Activated T-helper 1 cell treated with anti-CD3 and anti-CD28 coated beads, Interleukin-12 subunit alpha, Interleukin-12 subunit beta, Interleukin-2, Interleukin-4 antibody, amounts not matched to agents 30 ng/mL and 10 ng/mL and 1 ng/mL, durations not matched to agents 14 hours and 24 hours and 36 hours (primary cell): ENCODE measurements at regions of chr11 and their contacts with region 1.

Region 1: DNA sequence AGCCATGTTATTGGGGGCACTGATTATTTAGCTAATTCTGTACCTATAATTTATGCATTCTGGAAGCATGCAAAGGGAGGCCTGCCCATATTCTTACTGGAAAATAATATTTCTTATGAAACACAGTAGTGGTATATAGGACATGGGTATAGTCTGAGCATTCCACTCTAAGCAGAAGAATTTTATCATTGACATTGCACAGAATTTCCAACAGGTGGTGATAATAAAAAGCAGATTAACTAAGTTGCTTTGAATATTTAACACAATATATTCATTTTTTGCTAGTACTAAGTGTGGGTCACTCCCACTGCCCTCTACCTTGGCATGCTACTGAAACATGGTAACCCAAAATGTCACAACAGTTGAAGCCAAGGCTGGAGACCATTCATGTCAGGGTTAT is 728.8 kb upstream of the FAT3 start:
- DNase-seq: no peak
- H3K4me3 Mint-ChIP-seq: no peak overlapping the region
- H3K27ac Mint-ChIP-seq: no peak overlapping the region
- H3K4me1 Mint-ChIP-seq: no peaks in the 10 kb centered on the region
- H3K27me3 Mint-ChIP-seq: no peaks in the 10 kb centered on the region

Region 2: GRCh38 chr11:89660234-89660633 is 1835.6 kb before region 1 on chr11:
- intact Hi-C with region 1: no loop called
- DNase-seq: no peak
- H3K4me3 Mint-ChIP-seq: no peak overlapping the region
- H3K27ac Mint-ChIP-seq: no peak overlapping the region
- H3K4me1 Mint-ChIP-seq: no peaks in the 10 kb centered on the region
- H3K27me3 Mint-ChIP-seq: no peaks in the 10 kb centered on the region

Region 3: DNA sequence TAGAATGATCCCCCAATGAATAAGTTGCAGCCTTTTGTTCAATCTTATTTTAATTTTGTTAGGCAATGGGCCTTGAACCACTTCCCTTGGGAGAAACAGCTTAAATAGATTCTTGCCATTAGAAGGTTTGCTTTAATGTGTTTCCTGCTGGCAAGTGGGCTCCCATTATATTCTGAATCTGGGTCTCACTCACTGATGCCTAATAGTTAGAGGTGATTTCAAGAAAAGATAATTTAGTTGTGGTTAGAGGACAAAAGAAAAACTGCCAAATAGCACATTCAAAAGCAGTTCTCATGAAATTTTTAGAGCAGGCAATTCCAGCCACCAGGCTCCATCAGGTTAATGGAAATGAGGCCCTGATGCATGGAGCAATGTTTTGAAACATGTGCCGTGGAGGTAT is 910.3 kb before region 1 on chr11:
- intact Hi-C with region 1: loop called (anchors 5 kb)
- DNase-seq: no peak
- H3K4me3 Mint-ChIP-seq: no peak overlapping the region
- H3K27ac Mint-ChIP-seq: no peak overlapping the region
- H3K4me1 Mint-ChIP-seq: no peaks in the 10 kb centered on the region
- H3K27me3 Mint-ChIP-seq: no peaks in the 10 kb centered on the region

Region 4: GRCh38 chr11:91382946-91383345 is 112.9 kb before region 1 on chr11:
- intact Hi-C with region 1: no loop called
- DNase-seq: no peak
- H3K4me3 Mint-ChIP-seq: no peak overlapping the region
- H3K27ac Mint-ChIP-seq: no peak overlapping the region
- H3K4me1 Mint-ChIP-seq: no peaks in the 10 kb centered on the region
- H3K27me3 Mint-ChIP-seq: no peaks in the 10 kb centered on the region

Region 5: DNA sequence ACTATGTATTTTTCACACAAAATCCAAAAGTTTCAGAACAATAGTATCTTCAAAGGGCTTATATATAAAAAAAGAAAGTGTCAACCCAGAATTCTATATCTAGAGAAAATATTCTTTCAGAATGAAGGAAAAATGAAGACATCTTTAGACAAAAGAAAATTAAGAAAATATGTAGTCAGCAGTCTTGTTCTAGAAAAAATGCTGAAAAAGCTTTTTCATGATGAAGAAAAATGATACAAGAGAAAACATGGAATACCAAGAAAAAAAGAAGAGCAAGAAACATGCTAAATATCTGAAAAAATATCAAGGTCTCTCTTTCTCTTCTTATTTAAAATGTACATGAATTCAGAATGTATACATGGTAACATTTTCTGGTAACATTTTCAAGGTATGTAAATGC is 88.0 kb before region 1 on chr11:
- intact Hi-C with region 1: no loop called
- DNase-seq: no peak
- H3K4me3 Mint-ChIP-seq: no peak overlapping the region
- H3K27ac Mint-ChIP-seq: no peak overlapping the region
- H3K4me1 Mint-ChIP-seq: no peaks in the 10 kb centered on the region
- H3K27me3 Mint-ChIP-seq: no peaks in the 10 kb centered on the region